Endothelial cell of umbilical vein (primary cell): ENCODE measurements at regions of chrX and their contacts with region 1.

Region 1: DNA sequence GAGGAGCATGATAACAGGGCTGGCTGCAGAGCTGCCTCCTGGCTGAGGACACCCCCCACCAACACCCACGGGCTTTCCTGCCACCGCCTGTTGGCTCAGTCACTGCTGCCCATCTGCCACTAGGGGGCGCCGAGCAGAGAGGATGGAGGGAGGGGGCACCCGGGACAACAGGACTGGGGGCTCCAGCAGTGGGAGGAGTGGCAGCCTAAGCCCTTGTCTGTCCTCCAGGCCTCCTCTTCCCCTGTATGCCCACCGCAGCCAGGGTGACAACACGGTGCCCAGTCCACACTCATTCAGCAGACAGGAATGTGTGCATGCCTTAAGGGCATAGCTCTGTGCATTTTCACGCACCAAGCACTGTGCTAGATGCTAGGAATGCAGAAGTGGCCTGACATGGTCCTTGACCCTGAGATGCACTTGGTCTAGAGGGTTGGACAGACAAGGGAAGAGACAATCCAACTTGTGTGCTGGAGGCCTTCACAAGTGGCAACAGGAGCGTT is 149.9 kb downstream of the AMMECR1 start:
- DNase-seq: no peak
- H3K4me3 ChIP-seq: no peak overlapping the region
- H3K27ac ChIP-seq: no peak overlapping the region
- H3K4me1 ChIP-seq: peaks cover 9% of the 10 kb centered on the region
- H3K27me3 ChIP-seq: no peaks in the 10 kb centered on the region
- CTCF ChIP-seq: peak; percentile 43 to 48
- POLR2A ChIP-seq: no peak

Region 2: GRCh38 chrX:109384699-109385098 is 783.3 kb before region 1 on chrX:
- CTCF ChIA-PET with region 1: no interaction called
- POLR2A ChIA-PET with region 1: no interaction called
- dilution Hi-C with region 1: no loop called
- intact Hi-C with region 1: no loop called
- DNase-seq: peak; percentile 28
- H3K4me3 ChIP-seq: no peak overlapping the region
- H3K27ac ChIP-seq: no peak overlapping the region
- H3K4me1 ChIP-seq: no peaks in the 10 kb centered on the region
- H3K27me3 ChIP-seq: peaks cover 0 to 1% of the 10 kb centered on the region in 2 experiments
- CTCF ChIP-seq: peak; percentile 10 to 29
- POLR2A ChIP-seq: no peak

Region 3: GRCh38 chrX:110180176-110180927 is 12.3 kb after region 1 on chrX:
- CTCF ChIA-PET with region 1: interaction called, 11 read pairs
- POLR2A ChIA-PET with region 1: no interaction called
- dilution Hi-C with region 1: no loop called
- intact Hi-C with region 1: no loop called
- DNase-seq: peak; percentile 67
- H3K4me3 ChIP-seq: no peak overlapping the region
- H3K27ac ChIP-seq: no peak overlapping the region
- H3K4me1 ChIP-seq: peaks cover 3% of the 10 kb centered on the region
- H3K27me3 ChIP-seq: no peaks in the 10 kb centered on the region
- CTCF ChIP-seq: no peak
- POLR2A ChIP-seq: no peak

Region 4: DNA sequence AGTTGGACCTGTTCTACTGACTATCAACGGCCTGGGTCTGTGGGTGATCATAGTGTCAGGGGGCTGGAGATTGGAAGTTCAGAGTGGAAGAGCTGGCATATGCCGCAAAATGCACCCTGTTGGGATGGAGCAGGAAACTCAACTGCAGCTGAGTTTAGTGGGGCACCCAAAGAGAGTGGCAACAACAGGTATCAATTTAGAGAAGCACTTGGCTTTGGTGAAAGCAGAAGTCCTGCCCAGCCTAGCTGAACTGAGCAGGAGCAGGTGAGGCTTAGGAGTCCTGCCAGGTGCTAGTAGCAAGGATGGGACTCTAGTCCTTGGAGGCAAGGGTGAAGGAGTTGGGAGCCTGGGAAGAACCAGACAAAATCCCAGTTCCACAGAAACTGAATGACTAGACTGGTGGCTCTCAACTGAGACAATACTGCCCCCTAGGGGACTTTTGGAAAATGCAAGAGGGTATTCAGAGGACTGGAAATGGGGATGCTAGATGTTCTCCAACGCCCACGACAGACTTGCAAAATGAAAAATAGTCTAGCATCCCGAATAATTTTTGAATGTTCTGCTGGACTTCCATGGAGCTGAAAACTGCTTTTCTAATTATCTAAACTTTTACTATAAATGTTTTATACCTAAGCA is 240.0 kb after region 1 on chrX:
- CTCF ChIA-PET with region 1: interaction called, 15 read pairs
- POLR2A ChIA-PET with region 1: no interaction called
- dilution Hi-C with region 1: no loop called
- intact Hi-C with region 1: no loop called
- DNase-seq: peak; percentile 29
- H3K4me3 ChIP-seq: no peak overlapping the region
- H3K27ac ChIP-seq: no peak overlapping the region
- H3K4me1 ChIP-seq: peaks cover 7% of the 10 kb centered on the region
- H3K27me3 ChIP-seq: no peaks in the 10 kb centered on the region
- CTCF ChIP-seq: peak; percentile 46 to 57
- POLR2A ChIP-seq: no peak

Region 5: GRCh38 chrX:110477593-110478228 is 309.7 kb after region 1 on chrX:
- CTCF ChIA-PET with region 1: no interaction called
- POLR2A ChIA-PET with region 1: no interaction called
- dilution Hi-C with region 1: no loop called
- intact Hi-C with region 1: no loop called
- DNase-seq: no peak
- H3K4me3 ChIP-seq: no peak overlapping the region
- H3K27ac ChIP-seq: no peak overlapping the region
- H3K4me1 ChIP-seq: no peaks in the 10 kb centered on the region
- H3K27me3 ChIP-seq: no peaks in the 10 kb centered on the region
- CTCF ChIP-seq: no peak
- POLR2A ChIP-seq: no peak

Region 6: GRCh38 chrX:111052478-111052877 is 884.5 kb after region 1 on chrX:
- CTCF ChIA-PET with region 1: no interaction called
- POLR2A ChIA-PET with region 1: no interaction called
- dilution Hi-C with region 1: no loop called
- intact Hi-C with region 1: no loop called
- DNase-seq: no peak
- H3K4me3 ChIP-seq: no peak overlapping the region
- H3K27ac ChIP-seq: no peak overlapping the region
- H3K4me1 ChIP-seq: no peaks in the 10 kb centered on the region
- H3K27me3 ChIP-seq: no peaks in the 10 kb centered on the region
- CTCF ChIP-seq: no peak
- POLR2A ChIP-seq: no peak